Ascending aorta (tissue), 2 donors: ENCODE measurements at regions of chr1 and their contacts with region 1.

Region 1: GRCh38 chr1:41109316-41110197 is 88.0 kb upstream of the SLFNL1 start:
- DNase-seq: peak in 1 of 2 donors; percentile 76
- H3K4me3 ChIP-seq: peak overlapping the region in 1 of 2 donors; percentile 42
- H3K27ac ChIP-seq: peak overlapping the region; percentile 98 to 99
- H3K4me1 ChIP-seq: peaks cover 8 to 25% of the 10 kb centered on the region in 2 donors
- H3K27me3 ChIP-seq: no peaks in the 10 kb centered on the region
- CTCF ChIP-seq: no peak

Region 2: DNA sequence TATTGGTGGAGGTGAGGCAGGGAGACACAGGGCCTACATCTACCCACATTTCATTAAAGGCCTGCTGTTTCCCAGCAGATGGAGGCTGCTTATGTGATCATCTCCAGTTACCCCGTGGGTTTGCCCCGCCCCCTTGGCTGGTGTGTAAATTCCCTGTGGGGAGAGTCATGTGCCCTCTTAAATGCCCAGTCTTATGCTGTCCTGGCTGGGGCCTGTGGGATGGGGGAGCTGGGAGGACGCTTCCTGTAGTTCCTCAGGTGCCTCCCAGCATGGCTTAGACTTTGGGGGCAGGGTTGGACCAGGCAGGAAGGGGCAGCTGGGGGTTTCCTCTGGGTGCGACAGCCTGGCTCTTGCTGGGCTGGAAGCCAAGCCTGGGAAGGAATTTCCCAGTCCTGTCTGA is 231.9 kb before region 1 on chr1:
- intact Hi-C with region 1: no loop called
- DNase-seq: peak; percentile 81 to 94
- H3K4me3 ChIP-seq: no peak overlapping the region
- H3K27ac ChIP-seq: peak overlapping the region; percentile 83 to 84
- H3K4me1 ChIP-seq: peaks cover 0 to 24% of the 10 kb centered on the region in 2 donors
- H3K27me3 ChIP-seq: no peaks in the 10 kb centered on the region
- CTCF ChIP-seq: no peak

Region 3: GRCh38 chr1:41241782-41242341 is 132.3 kb after region 1 on chr1 and contains the start of gene SCMH1:
- intact Hi-C with region 1: loop called (anchors 5 kb)
- DNase-seq: peak in 1 of 2 donors; percentile 68
- H3K4me3 ChIP-seq: peak within 1 kb of the TSS; percentile 90 to 95
- H3K27ac ChIP-seq: peak within 1 kb of the TSS; percentile 96 to 98
- H3K4me1 ChIP-seq: peaks cover 0 to 16% of the 10 kb centered on the region in 2 donors
- H3K27me3 ChIP-seq: no peaks in the 10 kb centered on the region
- CTCF ChIP-seq: no peak
- total RNA-seq, gene SCMH1: 55.9 TPM

Region 4: GRCh38 chr1:41529621-41530395 is 420.3 kb after region 1 on chr1:
- intact Hi-C with region 1: no loop called
- DNase-seq: peak in 1 of 2 donors; percentile 27
- H3K4me3 ChIP-seq: no peak overlapping the region
- H3K27ac ChIP-seq: no peak overlapping the region
- H3K4me1 ChIP-seq: no peaks in the 10 kb centered on the region
- H3K27me3 ChIP-seq: no peaks in the 10 kb centered on the region
- CTCF ChIP-seq: no peak

Region 5: DNA sequence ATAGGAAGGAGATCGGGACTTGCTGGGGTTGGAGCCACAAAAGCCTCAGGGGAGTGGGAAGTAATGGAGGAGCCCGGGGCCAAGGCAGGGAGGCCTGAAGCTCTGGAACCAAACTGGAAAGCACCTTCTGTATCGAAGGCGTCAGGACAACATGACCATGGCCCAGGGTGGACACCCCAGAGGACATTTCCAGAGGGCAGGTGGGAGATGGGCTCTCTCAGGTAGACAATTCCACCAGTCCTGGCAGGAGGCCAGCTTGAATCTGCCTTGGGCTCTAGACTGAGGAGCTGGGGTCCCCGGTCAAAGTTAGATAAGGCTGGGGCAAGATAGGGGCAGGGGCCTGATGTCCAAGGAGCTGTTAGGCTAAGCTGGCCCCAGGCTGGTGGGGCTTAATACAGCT is 479.8 kb after region 1 on chr1:
- intact Hi-C with region 1: no loop called
- DNase-seq: no peak
- H3K4me3 ChIP-seq: no peak overlapping the region
- H3K27ac ChIP-seq: no peak overlapping the region
- H3K4me1 ChIP-seq: no peaks in the 10 kb centered on the region
- H3K27me3 ChIP-seq: no peaks in the 10 kb centered on the region
- CTCF ChIP-seq: no peak

Region 6: DNA sequence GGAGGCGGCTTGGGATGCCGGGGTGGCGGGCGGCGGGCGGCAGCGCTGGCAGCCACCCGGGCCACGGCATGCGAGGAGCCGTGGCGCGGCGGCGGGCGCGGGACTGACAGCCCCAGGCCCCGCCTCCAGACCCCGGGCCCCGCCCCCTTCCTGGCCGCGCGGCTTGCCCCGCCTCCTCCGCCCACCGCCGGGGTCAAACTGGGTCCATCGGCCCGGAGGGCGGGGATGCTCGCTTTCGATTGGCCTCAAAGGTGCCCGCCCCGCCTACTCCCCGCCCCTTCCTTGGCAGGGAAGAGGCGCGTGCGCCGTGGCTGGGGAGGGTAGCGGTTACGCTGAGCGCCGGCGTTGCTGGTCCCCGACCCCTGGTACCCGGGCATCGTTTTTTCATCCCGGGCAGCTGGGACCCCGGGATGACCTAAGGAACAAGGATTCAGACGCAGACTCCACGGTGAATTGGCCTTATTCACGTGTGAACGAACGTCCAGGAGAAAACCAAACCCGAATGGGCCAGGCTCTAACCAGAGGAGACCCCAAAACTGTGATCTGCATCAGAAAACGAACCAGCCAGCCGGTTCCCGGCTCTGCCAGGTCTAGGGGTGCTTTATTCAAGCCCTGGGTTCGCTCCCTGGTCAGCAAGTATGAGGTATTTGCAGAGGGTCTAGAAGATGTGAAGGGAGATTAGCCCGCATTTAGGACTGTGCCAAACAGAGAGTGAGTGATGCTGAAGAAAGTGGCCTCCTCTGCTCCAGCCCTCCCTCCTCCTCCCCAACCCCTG is 926.5 kb after region 1 on chr1:
- intact Hi-C with region 1: no loop called
- DNase-seq: peak; percentile 81 to 98
- H3K4me3 ChIP-seq: peak overlapping the region; percentile 91 to 99
- H3K27ac ChIP-seq: peak overlapping the region; percentile 31 to 84
- H3K4me1 ChIP-seq: peaks cover 6 to 7% of the 10 kb centered on the region in 2 donors
- H3K27me3 ChIP-seq: no peaks in the 10 kb centered on the region
- CTCF ChIP-seq: no peak